CD4-positive, alpha-beta T cell (primary cell): ENCODE measurements at regions of chr12 and their contacts with region 1.

Region 1: DNA sequence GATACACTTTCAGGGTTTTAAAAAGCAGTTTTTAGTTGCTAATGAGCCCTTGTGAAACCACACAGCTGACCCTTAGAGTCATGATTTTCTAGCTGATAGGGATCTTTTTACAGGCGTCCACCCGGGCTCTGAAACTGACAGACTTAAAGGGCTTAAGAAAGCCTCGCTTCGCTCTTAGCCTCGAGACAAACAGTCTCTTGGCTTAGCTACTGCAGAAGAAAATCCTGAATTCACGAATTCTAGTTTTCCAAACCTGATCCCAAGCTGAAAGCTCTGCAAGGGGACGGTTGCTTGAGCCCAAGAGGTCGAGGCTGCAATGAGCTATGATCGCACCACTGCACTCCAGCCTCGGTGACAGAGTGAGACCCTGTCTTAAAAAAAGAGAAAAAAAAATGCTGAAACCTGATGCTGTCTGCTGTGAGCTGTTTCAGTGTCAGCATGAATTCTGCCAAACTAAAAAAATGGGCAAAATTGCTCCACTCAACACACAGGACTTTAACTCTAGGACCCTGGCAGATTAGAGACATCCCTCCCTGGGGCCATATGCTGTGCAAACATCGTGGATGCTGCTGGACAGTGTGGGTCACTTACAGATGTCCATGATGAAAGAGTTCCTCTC is 3.1 kb upstream of the HPD start:
- DNase-seq: no peak
- ATAC-seq: no peak
- H3K4me3 ChIP-seq: no peak overlapping the region
- H3K4me3 Mint-ChIP-seq: no peak overlapping the region
- H3K27ac ChIP-seq: no peak overlapping the region
- H3K27ac Mint-ChIP-seq: no peak overlapping the region
- H3K4me1 ChIP-seq: no peaks in the 10 kb centered on the region
- H3K4me1 Mint-ChIP-seq: no peaks in the 10 kb centered on the region
- H3K27me3 ChIP-seq: no peaks in the 10 kb centered on the region
- H3K27me3 Mint-ChIP-seq: no peaks in the 10 kb centered on the region
- CTCF ChIP-seq: no peak

Region 2: DNA sequence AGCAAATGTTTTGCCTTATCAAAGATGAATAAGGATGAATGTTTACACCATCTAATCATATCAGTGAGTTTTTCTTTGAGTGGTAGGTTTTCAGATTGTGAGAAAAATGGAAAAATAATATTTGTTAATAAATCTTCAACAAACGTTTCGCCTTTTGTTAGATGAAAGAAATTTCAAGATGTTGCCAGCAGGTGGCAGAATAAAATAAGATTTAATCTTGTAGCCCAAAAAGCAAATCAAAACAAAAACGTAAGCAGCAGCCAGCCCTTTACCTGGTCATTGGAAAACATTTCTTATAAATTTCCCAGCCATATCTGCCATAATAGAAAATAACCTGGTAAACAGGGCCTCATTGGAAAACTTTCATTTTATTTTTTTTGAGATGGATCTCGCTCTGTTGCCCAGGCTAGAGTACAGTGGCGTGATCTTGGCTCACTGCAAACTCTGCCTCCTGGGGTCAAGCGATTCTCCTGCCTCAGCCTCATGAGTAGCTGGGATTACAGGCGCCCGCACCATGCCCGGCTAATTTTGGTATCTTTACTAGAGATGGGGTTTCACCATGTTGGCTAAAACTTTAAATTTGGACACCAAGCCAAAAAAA is 164.5 kb before region 1 on chr12:
- CTCF ChIA-PET with region 1: no interaction called
- POLR2A ChIA-PET with region 1: no interaction called
- intact Hi-C with region 1: no loop called
- DNase-seq: peak in 4 of 14 experiments; percentile 55 to 79 (median 78)
- ATAC-seq: peak; percentile 32
- H3K4me3 ChIP-seq: no peak overlapping the region
- H3K4me3 Mint-ChIP-seq: no peak overlapping the region
- H3K27ac ChIP-seq: no peak overlapping the region
- H3K27ac Mint-ChIP-seq: no peak overlapping the region
- H3K4me1 ChIP-seq: peaks cover 2% of the 10 kb centered on the region
- H3K4me1 Mint-ChIP-seq: peaks cover 4% of the 10 kb centered on the region
- H3K27me3 ChIP-seq: no peaks in the 10 kb centered on the region
- H3K27me3 Mint-ChIP-seq: no peaks in the 10 kb centered on the region
- CTCF ChIP-seq: peak; percentile 81

Region 3: GRCh38 chr12:121970581-121971300 is 109.0 kb after region 1 on chr12:
- CTCF ChIA-PET with region 1: no interaction called
- POLR2A ChIA-PET with region 1: no interaction called
- intact Hi-C with region 1: loop called in 1 of 2 experiments (anchors 10 kb)
- DNase-seq: no peak
- ATAC-seq: no peak
- H3K4me3 ChIP-seq: no peak overlapping the region
- H3K4me3 Mint-ChIP-seq: no peak overlapping the region
- H3K27ac ChIP-seq: no peak overlapping the region
- H3K27ac Mint-ChIP-seq: no peak overlapping the region
- H3K4me1 ChIP-seq: no peaks in the 10 kb centered on the region
- H3K4me1 Mint-ChIP-seq: no peaks in the 10 kb centered on the region
- H3K27me3 ChIP-seq: no peaks in the 10 kb centered on the region
- H3K27me3 Mint-ChIP-seq: no peaks in the 10 kb centered on the region
- CTCF ChIP-seq: no peak